GM10248 (cell line): ENCODE measurements at regions of chr11 and their contacts with region 1.

Region 1: DNA sequence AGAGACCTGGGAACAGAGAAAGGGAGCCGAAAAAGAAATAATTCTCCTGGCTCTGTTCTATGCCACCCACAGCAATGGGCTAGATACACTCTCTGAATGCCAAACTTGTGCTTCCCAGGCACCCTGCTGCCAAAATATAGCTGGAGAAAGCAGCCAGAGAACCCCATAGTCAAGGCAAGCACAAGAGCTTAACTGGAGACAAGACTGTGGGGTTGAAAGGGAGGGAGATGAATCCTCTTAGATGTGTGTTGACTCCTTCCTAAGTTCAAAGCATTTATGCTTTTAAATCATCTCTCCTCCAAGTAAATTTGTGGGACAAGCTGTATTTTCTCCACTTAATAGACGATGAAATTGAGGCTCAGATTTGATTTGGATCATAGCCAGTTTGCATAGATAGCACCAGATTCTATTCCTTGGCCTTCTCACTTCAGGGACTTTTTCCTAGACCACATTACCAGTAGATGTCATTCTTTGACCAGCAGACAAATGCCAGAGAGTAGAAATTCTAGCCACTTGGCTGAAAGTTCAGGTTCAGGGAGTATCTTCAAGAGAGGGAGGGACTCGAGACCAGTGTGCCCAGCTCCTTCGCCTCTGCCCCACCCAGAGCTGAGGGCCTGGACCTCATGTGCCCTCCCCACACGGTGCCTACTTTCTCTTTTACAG is 16.5 kb upstream of the ETS1 start:
- DNase-seq: peak; percentile 25
- CTCF ChIP-seq: peak; percentile 40

Region 2: DNA sequence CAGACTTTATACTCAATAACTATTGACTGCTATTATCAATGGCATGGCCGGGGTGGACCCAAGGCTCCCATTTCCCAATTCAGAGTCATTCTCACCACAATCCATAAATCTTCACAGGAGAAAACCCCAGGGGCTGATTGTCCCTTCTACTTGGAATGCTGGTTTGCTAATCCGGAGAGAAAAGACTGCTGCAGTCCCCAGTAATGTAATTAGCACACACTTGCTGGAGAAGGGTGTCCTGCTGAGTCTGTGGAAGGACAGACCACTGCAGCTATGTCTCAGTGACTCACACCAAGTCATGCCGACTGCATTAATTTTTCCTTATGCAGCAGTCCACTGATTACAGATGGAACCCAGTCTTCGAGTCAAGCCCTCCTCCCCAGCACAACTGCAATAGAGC is 10.6 kb before region 1 on chr11:
- CTCF ChIA-PET with region 1: interaction called, 19 read pairs
- POLR2A ChIA-PET with region 1: no interaction called
- DNase-seq: no peak
- CTCF ChIP-seq: no peak

Region 3: GRCh38 chr11:128624269-128625175 is 20.6 kb after region 1 on chr11:
- CTCF ChIA-PET with region 1: interaction called, 87 read pairs
- POLR2A ChIA-PET with region 1: no interaction called
- DNase-seq: peak; percentile 67
- CTCF ChIP-seq: no peak

Region 4: GRCh38 chr11:128968916-128969315 is 365.0 kb after region 1 on chr11:
- CTCF ChIA-PET with region 1: no interaction called
- POLR2A ChIA-PET with region 1: no interaction called
- DNase-seq: no peak
- CTCF ChIP-seq: no peak